Cardiac septum (tissue), 1 donor: ENCODE measurements at regions of chr17 and their contacts with region 1.

Region 1: DNA sequence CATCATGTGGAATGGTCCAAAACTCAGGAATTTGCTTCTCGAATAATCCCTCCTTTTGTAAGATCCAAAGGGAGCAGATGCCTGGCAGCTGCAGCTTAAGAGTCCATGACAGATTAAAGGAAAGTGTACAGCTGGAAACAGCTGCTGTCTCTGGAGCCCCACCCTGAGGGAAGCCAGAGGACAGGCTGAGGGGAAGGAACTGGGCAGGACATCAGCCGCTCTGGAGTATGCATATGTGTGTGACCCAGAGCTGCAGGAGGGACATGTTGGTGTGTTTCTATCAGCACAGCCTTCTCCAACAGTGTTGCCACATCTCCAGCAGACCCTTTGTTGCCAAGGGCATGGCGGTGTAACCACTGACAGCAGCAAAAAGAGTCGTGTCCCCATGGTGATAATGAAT is 46.2 kb downstream of the CYB561 start:
- DNase-seq: no peak

Region 2: GRCh38 chr17:62995377-62995885 is 404.4 kb before region 1 on chr17:
- intact Hi-C with region 1: loop called (anchors 5 kb)
- DNase-seq: no peak

Region 3: DNA sequence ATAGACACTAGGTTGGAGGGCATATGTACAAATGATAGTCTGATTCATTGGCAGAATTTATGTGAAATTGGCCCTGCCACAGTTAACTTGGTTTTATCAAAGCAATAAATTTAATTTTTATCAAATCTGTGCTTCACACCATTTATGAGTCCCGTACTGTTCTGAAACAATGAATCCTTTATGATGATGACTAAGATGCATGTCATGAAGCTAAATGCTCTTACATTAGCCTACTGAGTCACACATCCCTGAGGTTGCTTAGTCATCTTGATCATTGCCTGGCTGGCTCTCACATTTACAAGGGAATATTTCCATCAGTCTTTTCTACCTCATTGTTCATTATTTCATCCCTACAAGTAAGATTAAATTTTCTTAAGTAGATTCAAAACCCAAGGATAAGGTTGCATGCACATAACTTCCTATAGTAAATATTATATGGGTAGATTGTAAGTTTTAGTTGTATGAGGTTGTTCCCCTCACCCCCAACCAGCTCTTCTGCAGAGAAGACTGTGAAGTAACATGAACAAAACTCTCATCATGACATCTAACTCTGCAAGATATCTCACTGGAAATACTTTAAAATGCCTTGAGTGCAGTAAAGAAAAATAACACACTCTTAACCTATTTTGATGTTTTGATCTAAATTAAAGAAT is 124.4 kb before region 1 on chr17:
- intact Hi-C with region 1: loop called (anchors 2 kb)
- DNase-seq: no peak

Region 4: GRCh38 chr17:63317166-63317840 is 82.6 kb before region 1 on chr17:
- intact Hi-C with region 1: no loop called
- DNase-seq: no peak

Region 5: GRCh38 chr17:63751806-63752205 is 351.9 kb after region 1 on chr17:
- intact Hi-C with region 1: no loop called
- DNase-seq: no peak